ENCODE measurements at regions of chr4 and their contacts with region 1.

Region 1: DNA sequence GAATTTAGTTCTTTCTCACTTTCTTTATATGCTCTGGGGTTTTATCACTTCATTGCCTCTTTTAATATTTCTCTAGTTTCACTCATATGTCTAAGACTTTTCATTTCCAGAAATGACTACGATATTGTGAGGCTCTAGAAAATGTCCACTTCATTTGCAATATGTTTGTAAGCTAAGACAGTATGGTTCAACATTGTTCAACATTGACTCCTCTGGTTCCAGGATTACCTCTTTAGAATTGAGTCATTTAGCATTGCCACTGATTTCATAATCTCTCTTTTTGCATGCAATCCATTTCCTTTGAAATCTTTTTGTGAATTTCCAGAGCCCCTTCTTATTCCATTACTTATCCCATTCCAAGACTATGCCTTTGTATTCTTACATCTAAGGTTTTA is 32.3 kb downstream of the BBS12 start:
- DNase-seq: no peak
- H3K4me3 ChIP-seq: no peak overlapping the region
- H3K27ac ChIP-seq: no peak overlapping the region
- H3K4me1 ChIP-seq: no peaks in the 10 kb centered on the region
- H3K27me3 ChIP-seq: no peaks in the 10 kb centered on the region
- CTCF ChIP-seq: no peak
- POLR2A ChIP-seq: no peak

Region 2: DNA sequence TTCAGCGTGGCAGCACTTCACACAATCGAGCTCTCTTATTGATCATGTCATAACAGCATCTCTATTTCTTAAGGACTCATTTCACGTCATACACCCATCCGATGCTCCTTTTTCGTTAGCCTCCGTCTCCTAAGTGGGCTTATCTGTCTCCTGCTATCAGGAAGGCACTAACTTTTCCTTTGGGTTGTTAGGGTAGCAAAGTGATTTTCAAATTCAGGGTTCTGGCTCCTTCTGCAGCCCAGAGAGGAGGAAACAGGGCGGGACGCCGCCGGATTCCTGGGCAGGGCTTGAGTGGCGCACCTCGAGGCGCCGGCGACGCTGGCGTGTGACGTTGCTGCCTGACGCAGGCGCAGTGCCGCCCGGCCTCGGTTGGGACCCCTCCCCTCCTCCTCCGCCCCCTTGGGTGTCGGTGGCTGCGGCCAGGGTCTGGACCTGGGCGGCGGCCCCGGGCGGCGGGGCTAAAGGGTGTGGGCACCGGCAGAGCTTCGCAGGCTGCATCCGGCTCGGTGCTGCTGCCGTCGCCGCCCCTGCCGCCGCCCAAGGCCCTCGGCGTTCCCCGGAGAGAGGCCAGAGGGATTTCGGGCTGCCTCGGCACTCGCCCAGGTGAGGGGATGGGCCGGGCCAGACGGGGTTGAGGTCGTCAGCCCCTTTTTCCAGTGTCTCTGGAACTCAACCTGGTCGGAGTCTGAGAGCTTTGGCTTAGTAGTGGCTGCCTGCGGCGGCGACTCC is 612.7 kb before region 1 on chr4 and contains the start of gene BLTP1:
- intact Hi-C with region 1: loop called (anchors 10 kb)
- DNase-seq: peak; percentile 70 to 80
- H3K4me3 ChIP-seq: peak within 1 kb of the TSS; percentile 96 to 98 (median 97)
- H3K27ac ChIP-seq: peak within 1 kb of the TSS; percentile 96 to 97
- H3K4me1 ChIP-seq: peaks cover 0 to 7% of the 10 kb centered on the region in 2 donors
- H3K27me3 ChIP-seq: no peaks in the 10 kb centered on the region
- CTCF ChIP-seq: no peak
- POLR2A ChIP-seq: no peak
- total RNA-seq, gene BLTP1: 134 to 193 (median 160) TPM

Region 3: GRCh38 chr4:122922877-122923511 is 158.2 kb after region 1 on chr4:
- intact Hi-C with region 1: loop called (anchors 5 kb)
- DNase-seq: peak; percentile 63 to 74
- H3K4me3 ChIP-seq: peak overlapping the region; percentile 75 to 84 (median 76)
- H3K27ac ChIP-seq: peak overlapping the region; percentile 31 to 81
- H3K4me1 ChIP-seq: no peaks in the 10 kb centered on the region
- H3K27me3 ChIP-seq: no peaks in the 10 kb centered on the region
- CTCF ChIP-seq: no peak
- POLR2A ChIP-seq: no peak